ENCODE measurements at regions of chr2 and their contacts with region 1.

Region 1: DNA sequence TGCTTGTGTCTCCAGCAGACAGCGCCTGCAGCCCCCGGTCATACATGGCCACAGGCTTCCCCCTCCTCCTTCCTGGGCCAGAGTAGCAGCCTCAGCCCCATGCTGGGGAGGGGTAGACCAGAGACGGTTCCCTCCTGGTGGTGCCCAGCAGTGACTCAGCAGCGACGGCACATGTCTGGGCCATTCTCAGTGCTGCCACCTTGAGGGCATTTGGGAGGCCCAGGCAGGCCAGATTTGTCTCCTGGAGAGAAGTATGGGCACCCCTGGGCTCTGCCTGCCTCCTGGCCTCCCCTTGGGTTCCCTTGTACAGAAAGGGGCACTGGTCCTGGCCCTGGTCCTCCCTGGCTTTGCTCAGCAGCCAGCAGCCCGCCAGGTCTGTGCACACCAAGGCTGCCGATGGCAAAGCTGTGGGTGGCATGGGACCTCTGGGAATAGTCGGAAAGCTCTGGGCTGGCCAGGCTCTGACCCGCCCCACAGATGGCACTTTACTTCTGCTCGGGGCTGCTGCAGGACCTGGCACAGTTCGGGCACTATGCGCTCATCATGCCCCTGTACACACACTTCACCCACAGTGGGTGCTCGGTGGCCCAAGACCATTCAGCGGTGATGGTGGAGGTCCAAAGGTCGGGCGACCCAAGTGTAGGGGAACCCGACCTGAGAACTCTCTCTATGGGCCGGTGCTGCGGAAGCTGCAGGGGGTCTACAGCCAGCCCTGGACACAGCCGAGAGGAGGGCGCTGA is 11.4 kb upstream of the ALPI start:
- DNase-seq: no peak
- H3K4me3 ChIP-seq: no peak overlapping the region
- H3K27ac ChIP-seq: no peak overlapping the region
- H3K4me1 ChIP-seq: peaks cover 0 to 5% (median 0%) of the 10 kb centered on the region in 3 donors
- H3K27me3 ChIP-seq: peaks cover 0 to 9% (median 0%) of the 10 kb centered on the region in 4 donors
- CTCF ChIP-seq: peak in 5 of 6 experiments; percentile 48 to 79 (median 56)
- POLR2A ChIP-seq: no peak

Region 2: GRCh38 chr2:232030229-232030628 is 414.4 kb before region 1 on chr2:
- intact Hi-C with region 1: no loop called
- DNase-seq: no peak
- H3K4me3 ChIP-seq: no peak overlapping the region
- H3K27ac ChIP-seq: no peak overlapping the region
- H3K4me1 ChIP-seq: peaks cover 0 to 8% (median 4%) of the 10 kb centered on the region in 3 donors
- H3K27me3 ChIP-seq: no peaks in the 10 kb centered on the region
- CTCF ChIP-seq: peak in 3 of 6 experiments; percentile 4 to 49 (median 18)
- POLR2A ChIP-seq: no peak

Region 3: DNA sequence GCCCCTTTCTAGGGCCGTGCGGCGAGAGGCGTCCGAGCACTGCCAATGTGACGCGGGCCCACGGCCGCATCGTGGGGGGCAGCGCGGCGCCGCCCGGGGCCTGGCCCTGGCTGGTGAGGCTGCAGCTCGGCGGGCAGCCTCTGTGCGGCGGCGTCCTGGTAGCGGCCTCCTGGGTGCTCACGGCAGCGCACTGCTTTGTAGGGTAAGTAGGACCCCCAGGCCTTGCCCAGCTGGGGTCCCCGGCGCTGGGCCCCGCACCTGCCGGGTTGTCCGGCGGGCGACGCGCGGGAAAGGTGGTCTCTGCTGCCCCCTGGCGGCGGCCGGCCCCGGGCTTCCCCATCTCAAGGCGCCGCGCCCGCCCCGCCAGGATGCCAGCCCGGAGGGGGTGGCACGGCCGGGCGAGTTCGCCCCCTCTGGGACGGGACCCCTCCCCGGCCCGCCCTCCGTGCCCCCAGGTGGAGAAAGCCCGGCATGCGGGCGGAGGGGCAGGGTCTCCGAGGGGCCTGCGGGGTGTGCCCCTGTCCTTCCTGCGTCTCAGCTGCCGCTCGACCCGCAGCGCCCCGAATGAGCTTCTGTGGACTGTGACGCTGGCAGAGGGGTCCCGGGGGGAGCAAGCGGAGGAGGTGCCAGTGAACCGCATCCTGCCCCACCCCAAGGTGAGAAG is 77.5 kb after region 1 on chr2:
- intact Hi-C with region 1: loop called (anchors 5 kb)
- DNase-seq: no peak
- H3K4me3 ChIP-seq: peak overlapping the region in 2 of 4 donors; percentile 19 to 57
- H3K27ac ChIP-seq: no peak overlapping the region
- H3K4me1 ChIP-seq: peaks cover 17 to 39% (median 26%) of the 10 kb centered on the region in 3 donors
- H3K27me3 ChIP-seq: peaks cover 19 to 91% (median 23%) of the 10 kb centered on the region in 4 donors
- CTCF ChIP-seq: peak; percentile 78 to 96 (median 84)
- POLR2A ChIP-seq: no peak